ENCODE measurements at regions of chr10 and their contacts with region 1.

Region 1: GRCh38 chr10:59625721-59626522 is 83.7 kb downstream of the SLC16A9 start:
- DNase-seq: peak; percentile 68
- CTCF ChIP-seq: peak; percentile 85

Region 2: GRCh38 chr10:58781873-58782488 is 843.9 kb before region 1 on chr10:
- CTCF ChIA-PET with region 1: interaction called, 64 read pairs
- POLR2A ChIA-PET with region 1: no interaction called
- DNase-seq: peak; percentile 30
- CTCF ChIP-seq: peak; percentile 55

Region 3: GRCh38 chr10:59606551-59606961 is 19.4 kb before region 1 on chr10:
- CTCF ChIA-PET with region 1: interaction called, 91 read pairs
- POLR2A ChIA-PET with region 1: no interaction called
- DNase-seq: no peak
- CTCF ChIP-seq: no peak

Region 4: GRCh38 chr10:59771162-59771807 is 145.4 kb after region 1 on chr10:
- CTCF ChIA-PET with region 1: no interaction called
- POLR2A ChIA-PET with region 1: no interaction called
- DNase-seq: no peak
- CTCF ChIP-seq: no peak

Region 5: DNA sequence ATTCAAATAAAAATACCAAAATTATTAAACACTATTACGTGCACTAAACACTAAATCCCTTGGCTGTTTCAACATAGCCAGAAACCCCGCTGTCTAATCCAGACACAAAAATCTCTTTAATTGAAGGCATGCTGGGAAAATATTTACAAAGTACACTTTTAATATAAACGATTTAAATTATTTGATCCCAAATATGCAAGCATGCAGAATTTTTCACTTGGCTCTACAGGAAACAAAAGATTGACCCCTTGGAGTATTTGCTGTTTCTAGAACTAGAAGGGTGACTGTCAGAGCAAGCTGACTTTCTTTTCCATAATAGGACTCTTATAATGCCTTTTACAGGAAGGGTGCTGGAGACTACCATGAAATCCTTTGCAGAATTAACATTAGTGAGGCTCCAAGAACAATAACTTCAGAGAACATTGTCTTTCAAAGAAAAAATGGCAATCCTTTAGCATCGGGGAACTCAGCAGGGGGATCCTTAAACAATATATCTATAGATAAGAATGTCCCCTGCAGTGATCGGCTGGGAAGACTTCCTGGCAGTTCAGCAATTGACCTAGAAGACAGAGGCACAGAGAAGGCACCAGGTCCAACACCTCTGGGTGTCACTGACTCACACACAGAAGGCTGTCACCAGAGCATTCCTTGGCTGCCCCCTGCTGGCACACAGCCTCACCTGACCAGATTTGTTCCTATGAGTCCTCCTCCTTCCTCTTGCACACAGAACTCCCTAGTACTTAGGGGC is 183.1 kb after region 1 on chr10:
- CTCF ChIA-PET with region 1: interaction called, 112 read pairs
- POLR2A ChIA-PET with region 1: no interaction called
- DNase-seq: peak; percentile 52
- CTCF ChIP-seq: peak; percentile 73

Region 6: GRCh38 chr10:59830601-59831259 is 204.8 kb after region 1 on chr10:
- CTCF ChIA-PET with region 1: interaction called, 33 read pairs
- POLR2A ChIA-PET with region 1: no interaction called
- DNase-seq: no peak
- CTCF ChIP-seq: peak; percentile 58

Region 7: DNA sequence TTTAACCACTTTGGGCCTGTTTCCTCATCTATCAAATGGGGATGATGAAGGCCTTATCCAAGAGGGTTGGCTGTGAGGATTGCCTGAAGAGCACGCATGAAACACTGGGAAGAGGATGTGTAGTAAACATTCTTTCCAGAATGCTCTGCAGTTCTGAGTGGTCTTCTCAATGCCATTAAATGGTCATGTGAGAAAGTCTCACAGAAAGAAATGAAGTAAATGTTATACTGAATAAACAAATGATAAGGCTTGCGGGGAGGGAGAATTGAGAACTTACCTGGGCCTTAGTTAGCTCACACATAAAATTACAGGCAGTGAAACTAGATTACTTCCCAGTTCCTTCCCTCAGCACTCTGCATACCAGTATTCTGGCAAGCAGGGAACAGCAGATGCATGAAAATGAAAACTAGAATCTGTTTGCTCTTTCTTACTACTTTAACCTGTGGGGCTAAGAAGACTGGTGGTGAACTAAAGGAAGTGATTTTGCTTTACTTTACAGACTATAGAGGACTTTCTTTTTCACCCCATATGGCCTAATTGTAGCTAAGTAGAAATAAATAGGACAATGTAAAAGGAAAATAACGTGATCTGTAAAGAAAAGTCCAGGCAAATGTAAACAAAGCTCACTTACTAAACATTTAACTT is 415.7 kb after region 1 on chr10:
- CTCF ChIA-PET with region 1: interaction called, 13 read pairs
- POLR2A ChIA-PET with region 1: no interaction called
- DNase-seq: no peak
- CTCF ChIP-seq: no peak

Measured in GM10248 (cell line).